ENCODE measurements at regions of chr17 and their contacts with region 1.

Region 1: DNA sequence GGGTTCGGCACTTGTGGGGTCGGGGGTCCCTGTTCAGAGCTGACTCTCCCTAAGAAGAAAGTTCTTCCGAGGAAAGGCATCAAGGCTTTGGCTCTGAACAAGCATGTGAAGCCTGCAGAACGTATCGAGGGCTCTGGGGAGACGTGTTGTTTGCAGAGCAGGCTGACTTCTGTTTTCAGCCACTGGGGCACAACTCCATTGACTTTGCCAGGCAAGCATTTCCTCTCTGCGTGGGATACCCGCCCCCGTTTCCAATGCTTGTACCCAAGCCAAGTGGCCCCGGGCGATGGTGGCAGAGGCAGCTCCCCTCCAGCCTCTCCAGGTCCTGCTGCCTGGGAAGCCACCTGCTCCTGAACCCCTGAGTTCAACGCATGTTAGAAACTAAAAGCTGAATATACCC is 255.7 kb downstream of the RBFOX3 start:
- DNase-seq: no peak
- H3K4me3 ChIP-seq: no peak overlapping the region
- H3K27ac ChIP-seq: no peak overlapping the region
- H3K27me3 ChIP-seq: peaks cover 2% of the 10 kb centered on the region
- CTCF ChIP-seq: no peak

Region 2: DNA sequence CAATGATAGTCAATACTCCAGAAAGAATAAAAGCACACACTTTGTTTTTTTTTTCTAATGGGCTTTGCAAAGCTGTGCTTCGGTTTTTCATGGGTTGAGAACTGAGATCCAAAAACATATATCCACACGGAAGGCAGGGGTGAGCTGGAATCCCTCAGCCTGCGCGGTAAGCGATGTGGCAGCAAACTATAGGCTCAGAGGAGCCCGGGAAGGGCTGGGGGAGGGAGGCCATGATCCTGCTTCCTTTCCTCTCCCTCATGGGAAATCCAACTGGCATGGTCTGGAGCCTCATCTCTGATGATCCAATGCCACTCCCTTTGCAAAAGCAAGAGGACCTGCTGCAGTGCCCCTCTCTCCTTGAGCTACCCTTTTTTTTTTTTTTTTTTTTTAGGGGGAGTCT is 247.5 kb after region 1 on chr17:
- CTCF ChIA-PET with region 1: no interaction called
- POLR2A ChIA-PET with region 1: interaction called, 11 read pairs
- DNase-seq: no peak
- H3K4me3 ChIP-seq: no peak overlapping the region
- H3K27ac ChIP-seq: no peak overlapping the region
- H3K27me3 ChIP-seq: peaks cover 28% of the 10 kb centered on the region
- CTCF ChIP-seq: no peak

Measured in AG04450 (cell line).